Mammary epithelial cell (primary cell): ENCODE measurements at regions of chr1 and their contacts with region 1.

Region 1: GRCh38 chr1:169133801-169134502 is 27.5 kb downstream of the ATP1B1 start:
- DNase-seq: no peak
- H3K4me3 ChIP-seq: no peak overlapping the region
- H3K27ac ChIP-seq: no peak overlapping the region
- H3K4me1 ChIP-seq: peaks cover 13% of the 10 kb centered on the region
- H3K27me3 ChIP-seq: no peaks in the 10 kb centered on the region
- CTCF ChIP-seq: peak; percentile 61 to 74

Region 2: DNA sequence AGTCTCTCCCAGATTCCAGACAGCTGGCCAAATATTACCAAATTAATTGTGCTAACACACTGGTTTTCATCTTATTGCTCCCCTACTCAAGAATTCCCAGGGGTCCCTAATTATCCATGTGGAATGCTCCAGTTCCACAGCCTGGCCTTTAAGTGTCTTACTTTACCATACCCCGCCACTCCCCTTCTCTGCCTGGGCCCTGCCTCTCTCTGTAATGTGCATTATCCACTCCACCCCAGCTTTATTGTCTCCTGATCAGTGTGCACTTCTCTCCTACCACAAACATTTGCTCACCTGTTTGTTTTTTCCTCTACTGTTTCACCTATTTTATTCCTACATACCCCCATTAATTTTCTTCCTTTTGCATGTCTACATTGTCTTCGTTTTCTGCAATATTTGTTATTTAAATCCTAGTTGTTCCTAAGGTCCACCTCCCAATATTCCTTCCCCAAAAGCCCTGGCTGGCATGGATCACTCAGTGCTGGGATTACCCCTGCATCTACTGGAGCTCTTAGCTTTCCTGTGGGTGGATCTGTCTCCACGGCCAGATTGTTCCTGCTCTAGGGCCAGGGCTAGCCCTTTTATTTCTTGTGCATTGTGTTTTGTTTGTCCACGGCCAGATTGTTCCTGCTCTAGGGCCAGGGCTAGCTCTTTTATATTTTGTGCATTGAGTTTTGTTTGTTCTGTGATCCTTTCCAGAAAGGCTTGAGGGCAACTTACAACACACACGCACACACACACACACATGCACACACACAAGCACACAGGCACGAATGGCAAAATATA is 60.8 kb before region 1 on chr1:
- CTCF ChIA-PET with region 1: no interaction called
- dilution Hi-C with region 1: no loop called
- in situ Hi-C with region 1: no loop called
- intact Hi-C with region 1: no loop called
- DNase-seq: no peak
- H3K4me3 ChIP-seq: no peak overlapping the region
- H3K27ac ChIP-seq: no peak overlapping the region
- H3K4me1 ChIP-seq: no peaks in the 10 kb centered on the region
- H3K27me3 ChIP-seq: no peaks in the 10 kb centered on the region
- CTCF ChIP-seq: no peak

Region 3: DNA sequence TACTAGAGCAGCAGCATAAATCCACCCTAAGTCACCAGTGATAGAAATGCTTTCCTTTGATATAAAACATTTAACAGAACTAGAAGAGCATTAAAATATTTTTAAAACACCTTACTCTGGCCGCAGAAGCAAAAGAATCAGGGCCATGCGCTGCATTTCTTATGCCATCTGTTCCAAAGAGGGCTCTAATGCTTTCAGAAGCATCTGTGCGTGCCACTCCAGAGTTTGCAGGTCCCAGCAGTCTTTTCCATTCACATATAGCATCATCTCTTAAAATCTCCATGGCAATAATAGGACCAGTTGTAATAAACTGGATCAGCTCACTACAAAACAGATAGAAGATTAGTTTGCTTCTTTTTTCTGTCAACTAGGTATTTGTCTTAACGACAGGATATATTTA is 164.5 kb after region 1 on chr1:
- CTCF ChIA-PET with region 1: interaction called, 15 read pairs
- dilution Hi-C with region 1: no loop called
- in situ Hi-C with region 1: no loop called
- intact Hi-C with region 1: no loop called
- DNase-seq: no peak
- H3K4me3 ChIP-seq: no peak overlapping the region
- H3K27ac ChIP-seq: no peak overlapping the region
- H3K4me1 ChIP-seq: no peaks in the 10 kb centered on the region
- H3K27me3 ChIP-seq: no peaks in the 10 kb centered on the region
- CTCF ChIP-seq: no peak